ENCODE measurements at regions of chr7 and their contacts with region 1.

Region 1: DNA sequence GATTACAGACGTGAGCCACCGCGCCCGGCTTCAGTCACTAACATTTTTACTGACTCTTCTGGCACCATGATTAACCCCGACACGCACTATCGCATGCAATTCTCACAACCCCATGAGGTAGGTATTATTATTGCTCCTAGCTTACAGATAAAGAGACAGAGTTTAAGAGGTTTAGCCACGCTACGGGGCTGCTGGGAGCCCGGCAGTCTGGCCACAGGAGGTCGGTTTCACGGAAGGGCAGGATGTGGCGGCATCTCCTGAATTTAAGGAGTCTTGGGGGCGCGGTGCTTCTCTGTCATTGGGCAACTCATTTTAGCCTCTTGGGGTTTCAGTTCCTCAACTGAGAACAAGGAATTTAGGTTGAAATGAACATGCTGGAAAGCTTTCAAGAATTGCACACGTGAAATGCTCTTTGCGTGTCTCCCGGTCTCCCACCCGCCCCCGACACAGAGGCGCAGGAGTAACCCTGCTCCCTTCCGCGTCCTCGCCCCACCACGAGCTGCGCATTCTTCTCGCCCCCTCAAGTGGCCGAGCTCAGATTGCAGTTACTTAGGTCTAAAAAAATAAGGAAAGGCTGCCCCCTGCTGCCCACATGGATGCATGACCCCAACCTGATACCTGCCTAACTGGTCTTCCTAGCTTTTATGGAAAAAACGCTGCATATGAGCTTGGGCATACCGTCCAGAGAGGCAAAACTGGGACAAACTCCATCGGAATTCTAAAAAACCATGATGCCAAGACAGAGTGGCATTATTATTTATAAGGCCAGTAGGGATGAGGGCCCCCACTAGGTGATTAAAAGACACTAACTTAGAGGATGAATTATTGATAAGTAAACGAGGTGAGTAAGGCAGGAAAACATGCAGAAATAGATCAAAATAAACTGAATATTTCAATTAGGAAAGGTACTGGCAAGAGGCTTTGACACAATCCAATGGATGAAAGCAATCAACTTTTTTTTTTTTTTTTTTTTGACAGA is 12.4 kb downstream of the PRSS2 start:
- DNase-seq: peak; percentile 88
- H3K4me3 Mint-ChIP-seq: peak overlapping the region; percentile 64
- H3K27ac Mint-ChIP-seq: no peak overlapping the region
- H3K4me1 Mint-ChIP-seq: no peaks in the 10 kb centered on the region
- H3K27me3 Mint-ChIP-seq: peaks cover 6% of the 10 kb centered on the region
- CTCF ChIP-seq: peak; percentile 94

Region 2: DNA sequence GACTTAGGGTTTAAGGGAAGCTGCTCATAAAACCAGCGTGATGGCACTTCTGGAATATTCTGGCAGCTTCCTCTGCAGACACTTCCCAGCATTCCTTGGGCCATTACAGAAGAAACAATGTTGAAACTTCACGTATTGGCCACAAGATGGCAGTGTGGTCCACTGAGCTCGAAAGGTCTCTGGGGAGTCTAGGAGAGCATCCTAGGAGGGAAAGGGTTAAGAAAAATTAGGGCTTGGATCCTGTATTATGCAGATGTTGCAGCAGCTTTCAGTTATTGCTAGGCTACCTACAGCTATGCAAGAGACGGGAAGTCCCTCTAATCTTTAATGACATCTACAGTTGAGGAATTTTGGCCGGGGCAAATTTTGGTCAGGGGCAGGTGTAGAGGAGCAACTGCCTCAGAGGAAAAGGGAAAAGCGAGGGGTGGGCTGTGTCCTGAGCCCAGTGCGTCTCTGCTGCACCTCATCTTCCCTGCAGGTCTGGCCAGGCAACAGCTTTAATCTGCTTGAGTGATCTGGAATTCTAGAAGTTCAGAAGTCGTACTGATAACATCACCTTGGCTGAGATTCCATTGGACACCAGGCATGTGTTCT is 304.6 kb before region 1 on chr7:
- CTCF ChIA-PET with region 1: interaction called, 11 read pairs
- POLR2A ChIA-PET with region 1: no interaction called
- intact Hi-C with region 1: no loop called
- DNase-seq: peak; percentile 80
- H3K4me3 Mint-ChIP-seq: no peak overlapping the region
- H3K27ac Mint-ChIP-seq: peak overlapping the region; percentile 22
- H3K4me1 Mint-ChIP-seq: peaks cover 32% of the 10 kb centered on the region
- H3K27me3 Mint-ChIP-seq: peaks cover 9% of the 10 kb centered on the region
- CTCF ChIP-seq: peak; percentile 57

Region 3: GRCh38 chr7:142535123-142535779 is 248.0 kb before region 1 on chr7:
- CTCF ChIA-PET with region 1: interaction called, 181 read pairs
- POLR2A ChIA-PET with region 1: no interaction called
- intact Hi-C with region 1: loop called (anchors 1 kb)
- DNase-seq: peak; percentile 93
- H3K4me3 Mint-ChIP-seq: no peak overlapping the region
- H3K27ac Mint-ChIP-seq: no peak overlapping the region
- H3K4me1 Mint-ChIP-seq: peaks cover 21% of the 10 kb centered on the region
- H3K27me3 Mint-ChIP-seq: no peaks in the 10 kb centered on the region
- CTCF ChIP-seq: peak; percentile 93

Region 4: GRCh38 chr7:142611566-142612236 is 171.5 kb before region 1 on chr7:
- CTCF ChIA-PET with region 1: interaction called, 24 read pairs
- POLR2A ChIA-PET with region 1: no interaction called
- intact Hi-C with region 1: no loop called
- DNase-seq: no peak
- H3K4me3 Mint-ChIP-seq: no peak overlapping the region
- H3K27ac Mint-ChIP-seq: no peak overlapping the region
- H3K4me1 Mint-ChIP-seq: peaks cover 11% of the 10 kb centered on the region
- H3K27me3 Mint-ChIP-seq: no peaks in the 10 kb centered on the region
- CTCF ChIP-seq: no peak

Region 5: GRCh38 chr7:142689439-142690120 is 93.6 kb before region 1 on chr7:
- CTCF ChIA-PET with region 1: interaction called, 8 read pairs
- POLR2A ChIA-PET with region 1: no interaction called
- intact Hi-C with region 1: loop called (anchors 1 kb)
- DNase-seq: no peak
- H3K4me3 Mint-ChIP-seq: no peak overlapping the region
- H3K27ac Mint-ChIP-seq: no peak overlapping the region
- H3K4me1 Mint-ChIP-seq: no peaks in the 10 kb centered on the region
- H3K27me3 Mint-ChIP-seq: peaks cover 40% of the 10 kb centered on the region
- CTCF ChIP-seq: peak; percentile 13

Region 6: DNA sequence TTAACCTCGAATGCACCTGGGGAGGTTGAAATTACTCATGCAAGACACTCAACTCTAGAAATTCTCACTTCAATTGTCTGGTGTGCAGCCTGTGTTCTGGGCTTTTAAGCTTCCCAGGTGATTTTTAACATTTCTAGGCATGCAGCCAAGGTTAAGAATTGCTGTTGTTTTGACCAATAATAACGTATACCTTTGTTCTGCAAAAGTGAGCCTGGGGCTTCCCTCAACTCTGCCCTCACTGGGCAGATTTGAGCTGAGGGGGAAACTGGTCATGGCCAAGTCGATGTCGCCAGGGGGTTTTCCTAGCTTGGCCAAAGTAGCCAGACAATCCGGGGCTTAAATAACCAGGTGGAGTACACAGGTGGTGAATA is 11.9 kb before region 1 on chr7:
- CTCF ChIA-PET with region 1: interaction called, 35 read pairs
- POLR2A ChIA-PET with region 1: no interaction called
- intact Hi-C with region 1: no loop called
- DNase-seq: peak; percentile 30
- H3K4me3 Mint-ChIP-seq: no peak overlapping the region
- H3K27ac Mint-ChIP-seq: no peak overlapping the region
- H3K4me1 Mint-ChIP-seq: peaks cover 13% of the 10 kb centered on the region
- H3K27me3 Mint-ChIP-seq: peaks cover 63% of the 10 kb centered on the region
- CTCF ChIP-seq: no peak

Region 7: GRCh38 chr7:142916508-142916907 is 133.3 kb after region 1 on chr7:
- CTCF ChIA-PET with region 1: no interaction called
- POLR2A ChIA-PET with region 1: no interaction called
- intact Hi-C with region 1: no loop called
- DNase-seq: no peak
- H3K4me3 Mint-ChIP-seq: no peak overlapping the region
- H3K27ac Mint-ChIP-seq: no peak overlapping the region
- H3K4me1 Mint-ChIP-seq: no peaks in the 10 kb centered on the region
- H3K27me3 Mint-ChIP-seq: peaks cover 80% of the 10 kb centered on the region
- CTCF ChIP-seq: no peak

Measured in MCF 10A (cell line).